ENCODE measurements at regions of chr11 and their contacts with region 1.

Region 1: DNA sequence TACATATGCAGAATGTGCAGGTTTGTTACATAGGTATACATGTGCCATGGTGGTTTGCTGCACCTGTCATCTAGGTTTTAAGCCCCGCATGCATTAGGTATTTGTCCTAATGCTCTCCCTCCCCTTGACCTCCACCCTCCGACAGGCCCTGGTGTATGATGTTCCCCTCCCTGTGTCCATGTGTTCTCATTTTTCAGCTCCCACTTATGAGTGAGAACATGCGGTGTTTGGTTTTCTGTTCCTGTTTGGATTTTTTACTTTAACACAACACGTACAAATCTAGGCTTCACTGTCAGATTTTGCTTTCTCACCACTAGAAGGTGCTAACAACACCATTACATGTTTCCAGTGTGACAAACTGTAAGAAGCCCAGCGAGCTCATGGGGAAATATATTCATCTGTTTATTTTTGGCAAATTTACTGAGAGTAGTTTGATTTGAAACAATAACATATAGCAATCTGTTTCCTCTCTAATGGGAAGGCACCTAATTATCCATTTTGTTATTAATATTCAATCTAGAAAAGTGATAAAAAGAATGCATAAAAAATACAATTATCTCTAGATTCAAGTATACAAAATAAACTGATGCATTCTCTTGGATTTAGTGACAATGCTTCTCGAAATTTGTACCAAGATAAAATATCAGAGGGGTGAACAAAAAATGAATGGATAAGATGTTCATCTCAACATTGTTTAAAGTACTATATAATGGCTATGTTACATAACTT is 23.2 kb upstream of the BIRC3 start:
- H3K4me3 ChIP-seq: no peak overlapping the region
- H3K27ac ChIP-seq: no peak overlapping the region
- H3K4me1 ChIP-seq: no peaks in the 10 kb centered on the region
- CTCF ChIP-seq: no peak

Region 2: DNA sequence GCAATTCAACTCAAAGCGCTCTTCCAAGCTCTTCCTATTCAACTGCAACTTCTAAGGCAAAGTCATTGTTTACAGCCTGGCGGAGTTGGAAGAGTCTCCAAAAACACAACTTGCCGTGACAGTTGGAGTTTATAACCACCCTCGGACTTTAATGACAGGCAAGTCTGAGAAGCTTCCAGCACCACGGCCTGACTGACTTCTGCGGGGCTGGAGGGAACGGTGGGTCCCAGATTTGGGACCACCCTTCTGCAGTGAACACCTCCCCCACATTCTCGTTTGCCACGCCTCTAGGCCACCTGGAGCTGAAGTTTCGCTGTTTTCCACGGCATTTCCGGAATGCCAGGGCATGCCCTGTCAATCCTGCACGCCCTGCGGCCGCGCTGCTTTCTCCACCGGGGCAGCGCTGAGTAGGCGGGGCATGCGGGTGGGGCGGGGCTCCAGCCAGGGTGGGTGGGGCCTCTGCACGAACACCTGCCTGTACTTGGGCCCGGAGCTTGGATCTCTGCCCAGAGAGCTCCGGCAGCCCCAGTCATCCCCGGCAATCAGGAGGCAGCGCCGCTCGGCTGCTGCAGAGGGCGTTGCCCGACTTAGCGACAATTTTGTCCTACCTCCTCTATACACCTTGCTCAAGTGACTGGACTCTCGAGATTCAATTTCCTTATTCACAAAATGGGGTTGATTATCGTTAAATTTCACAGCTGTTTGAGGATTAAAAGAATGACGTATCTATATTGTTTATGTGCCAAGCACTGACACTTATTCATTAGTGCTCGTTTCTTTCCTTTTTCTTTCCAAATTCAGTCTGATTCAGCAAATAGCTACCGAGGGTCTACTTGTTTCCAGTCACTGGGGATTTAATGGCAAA is 25.5 kb before region 1 on chr11:
- CTCF ChIA-PET with region 1: interaction called, 23 read pairs
- POLR2A ChIA-PET with region 1: no interaction called
- H3K4me3 ChIP-seq: peak overlapping the region; percentile 25
- H3K27ac ChIP-seq: no peak overlapping the region; the same call in 1 of the 2 replicates
- H3K4me1 ChIP-seq: no peaks in the 10 kb centered on the region
- CTCF ChIP-seq: no peak; the same call in 1 of the 2 replicates

Region 3: DNA sequence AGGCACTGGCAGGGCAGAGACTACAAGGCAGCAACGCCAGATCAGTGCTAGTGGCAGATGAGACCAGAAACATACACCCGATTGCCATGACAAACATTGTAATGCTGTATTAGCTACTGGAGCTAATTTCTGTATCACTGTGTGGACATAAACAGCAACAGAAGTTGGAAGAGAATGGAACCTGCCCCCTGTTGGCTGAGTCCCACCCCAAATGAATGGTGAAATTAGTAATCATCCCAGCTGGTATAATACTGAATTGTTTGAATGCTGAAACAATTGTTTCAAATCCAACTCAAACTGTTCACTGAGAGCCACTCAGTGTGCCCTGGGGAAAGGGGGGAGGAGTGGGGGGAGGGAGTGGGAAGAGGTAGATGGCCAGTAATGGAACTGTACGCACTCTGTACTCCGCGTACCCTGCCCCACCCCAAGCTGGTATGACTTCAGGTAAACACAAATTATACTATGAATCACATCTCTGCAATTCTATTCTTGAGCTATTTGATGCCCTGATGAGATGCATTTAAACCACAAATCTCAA is 12.1 kb after region 1 on chr11:
- CTCF ChIA-PET with region 1: interaction called, 20 read pairs
- POLR2A ChIA-PET with region 1: no interaction called
- H3K4me3 ChIP-seq: no peak overlapping the region
- H3K27ac ChIP-seq: no peak overlapping the region
- H3K4me1 ChIP-seq: 0 out of 2 replicates have a peak, but pooled peaks cover 3% of the 10 kb centered on the region
- CTCF ChIP-seq: no peak

Region 4: DNA sequence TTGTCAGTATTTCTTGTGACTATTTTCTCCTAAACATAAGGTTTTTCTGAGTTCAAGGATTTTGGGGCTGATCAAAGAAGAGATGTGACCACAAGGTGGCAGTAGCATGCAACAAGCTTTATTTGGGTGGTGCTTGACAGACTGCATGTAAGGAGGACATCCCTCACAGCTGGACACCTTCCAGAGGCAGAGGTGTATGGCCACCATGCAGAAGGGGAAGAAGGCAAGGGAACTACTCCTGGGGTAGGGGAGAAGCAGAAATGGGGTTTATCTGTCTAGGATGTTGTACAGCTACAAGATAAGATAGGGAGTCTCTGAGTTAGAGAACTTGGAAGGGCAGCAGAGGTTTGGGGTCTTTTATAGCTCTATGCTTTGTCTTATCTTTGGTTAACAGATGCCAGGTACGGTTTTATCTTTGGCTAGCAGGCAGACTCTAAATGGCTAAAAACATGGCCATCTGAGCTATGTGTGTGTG is 47.8 kb after region 1 on chr11:
- CTCF ChIA-PET with region 1: interaction called, 24 read pairs
- POLR2A ChIA-PET with region 1: no interaction called
- H3K4me3 ChIP-seq: no peak overlapping the region
- H3K27ac ChIP-seq: no peak overlapping the region
- H3K4me1 ChIP-seq: no peaks in the 10 kb centered on the region
- CTCF ChIP-seq: 0 out of 2 replicates have a peak, but pooled peaks have one; percentile 27

Region 5: GRCh38 chr11:102523189-102523570 is 229.1 kb after region 1 on chr11:
- CTCF ChIA-PET with region 1: interaction called, 10 read pairs
- POLR2A ChIA-PET with region 1: no interaction called
- H3K4me3 ChIP-seq: no peak overlapping the region
- H3K27ac ChIP-seq: no peak overlapping the region
- H3K4me1 ChIP-seq: no peaks in the 10 kb centered on the region
- CTCF ChIP-seq: no peak

Region 6: GRCh38 chr11:102666331-102666957 is 372.4 kb after region 1 on chr11:
- CTCF ChIA-PET with region 1: interaction called, 23 read pairs
- POLR2A ChIA-PET with region 1: no interaction called
- H3K4me3 ChIP-seq: no peak overlapping the region
- H3K27ac ChIP-seq: no peak overlapping the region
- H3K4me1 ChIP-seq: no peaks in the 10 kb centered on the region
- CTCF ChIP-seq: peak; percentile 30; the same call in 1 of the 2 replicates